B cell (primary cell): ENCODE measurements at regions of chr5 and their contacts with region 1.

Region 1: DNA sequence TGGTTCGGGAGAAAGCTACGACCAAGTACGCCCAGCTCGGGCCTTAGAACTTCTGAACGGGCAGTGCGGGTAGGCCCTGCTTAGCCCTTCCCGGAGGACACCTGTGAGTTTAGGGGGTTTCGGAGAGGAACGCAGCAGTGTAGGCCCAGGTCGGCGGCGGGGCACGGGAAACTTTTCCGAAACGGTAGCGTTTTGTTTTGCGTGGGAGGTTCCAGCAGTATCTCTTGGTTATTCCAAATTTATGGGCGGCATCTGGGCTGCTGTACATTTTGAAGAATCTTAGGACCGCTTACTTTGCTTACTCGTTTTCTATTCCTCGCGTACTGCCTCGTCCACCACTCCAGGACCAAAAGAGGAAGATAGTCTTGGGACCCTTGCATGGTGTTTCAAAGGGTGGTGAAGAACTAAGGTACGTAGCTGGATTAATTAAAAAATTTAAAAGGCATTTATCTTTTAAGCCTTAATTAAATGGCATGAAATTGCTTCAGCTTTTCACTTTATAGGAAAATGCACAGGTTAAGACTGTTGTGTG is 492 bp downstream of the TENT2 start:
- DNase-seq: no peak
- ATAC-seq: no peak
- H3K4me3 ChIP-seq: peak overlapping the region; percentile 93 to 98 (median 96)
- H3K4me3 Mint-ChIP-seq: peak overlapping the region; percentile 95
- H3K27ac ChIP-seq: peak overlapping the region; percentile 95 to 99
- H3K27ac Mint-ChIP-seq: peak overlapping the region; percentile 96
- H3K4me1 ChIP-seq: peaks cover 16 to 21% of the 10 kb centered on the region in 2 donors
- H3K4me1 Mint-ChIP-seq: peaks cover 36% of the 10 kb centered on the region
- H3K27me3 ChIP-seq: no peaks in the 10 kb centered on the region
- H3K27me3 Mint-ChIP-seq: no peaks in the 10 kb centered on the region
- CTCF ChIP-seq: no peak

Region 2: DNA sequence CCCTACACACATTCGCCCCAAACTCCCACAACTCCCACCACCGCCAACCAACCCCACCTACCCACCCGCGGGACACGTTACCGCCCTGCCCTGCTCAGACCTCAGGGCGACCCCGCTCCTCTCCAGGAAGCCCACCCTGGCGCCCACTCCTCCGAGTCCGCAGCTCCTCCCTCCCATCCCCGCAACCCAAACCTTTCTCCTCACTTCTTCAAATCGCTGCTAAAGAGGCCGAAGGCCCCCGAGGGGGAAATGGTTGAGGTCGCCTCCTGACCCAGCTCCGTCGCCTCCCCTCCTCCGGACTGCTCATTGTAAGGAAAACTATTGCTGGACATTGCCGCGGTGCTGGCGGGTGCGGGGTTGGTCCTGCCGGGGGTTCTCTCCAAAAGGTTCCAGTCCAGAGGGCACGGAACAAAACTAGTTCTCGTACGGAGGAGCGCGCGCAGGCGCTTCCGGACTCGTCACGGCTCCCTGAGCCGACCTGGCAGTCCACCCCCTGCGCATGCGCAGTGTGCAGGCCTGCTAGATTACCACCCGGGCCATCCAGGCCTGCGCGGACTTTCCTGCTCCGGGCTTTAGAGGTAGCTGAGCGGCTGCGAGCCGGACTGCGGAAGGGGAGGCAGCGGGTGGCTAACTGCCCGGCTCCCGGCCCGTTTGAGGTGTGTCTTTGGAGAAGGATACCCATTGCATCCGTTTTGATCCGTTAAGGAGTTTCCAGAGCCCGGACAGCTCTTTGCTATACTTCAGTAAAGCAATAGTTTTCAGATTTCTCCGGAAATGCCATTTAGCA is 1318.3 kb before region 1 on chr5 and contains the start of gene AP3B1:
- CTCF ChIA-PET with region 1: no interaction called
- POLR2A ChIA-PET with region 1: no interaction called
- intact Hi-C with region 1: loop called (anchors 5 kb)
- DNase-seq: peak; percentile 98
- ATAC-seq: peak; percentile 91
- H3K4me3 ChIP-seq: peak within 1 kb of the TSS; percentile 74 to 99 (median 87)
- H3K4me3 Mint-ChIP-seq: peak within 1 kb of the TSS; percentile 98
- H3K27ac ChIP-seq: peak within 1 kb of the TSS; percentile 75 to 90
- H3K27ac Mint-ChIP-seq: peak within 1 kb of the TSS; percentile 98
- H3K4me1 ChIP-seq: peaks cover 11 to 12% of the 10 kb centered on the region in 2 donors
- H3K4me1 Mint-ChIP-seq: peaks cover 36% of the 10 kb centered on the region
- H3K27me3 ChIP-seq: no peaks in the 10 kb centered on the region
- H3K27me3 Mint-ChIP-seq: no peaks in the 10 kb centered on the region
- CTCF ChIP-seq: no peak
- total RNA-seq, gene AP3B1: 58.9 and 63.5 TPM in 2 replicates

Region 3: GRCh38 chr5:79514391-79515105 is 98.2 kb before region 1 on chr5:
- CTCF ChIA-PET with region 1: interaction called, 4 read pairs
- POLR2A ChIA-PET with region 1: no interaction called
- intact Hi-C with region 1: loop called (anchors 1 kb)
- DNase-seq: peak; percentile 98
- ATAC-seq: peak; percentile 79
- H3K4me3 ChIP-seq: peak overlapping the region; percentile 32 to 85 (median 76)
- H3K4me3 Mint-ChIP-seq: peak overlapping the region; percentile 100
- H3K27ac ChIP-seq: peak overlapping the region; percentile 89 to 94
- H3K27ac Mint-ChIP-seq: peak overlapping the region; percentile 100
- H3K4me1 ChIP-seq: peaks cover 26 to 29% of the 10 kb centered on the region in 2 donors
- H3K4me1 Mint-ChIP-seq: peaks cover 36% of the 10 kb centered on the region
- H3K27me3 ChIP-seq: peaks cover 5 to 31% (median 28%) of the 10 kb centered on the region in 4 experiments
- H3K27me3 Mint-ChIP-seq: peaks cover 29% of the 10 kb centered on the region
- CTCF ChIP-seq: no peak

Region 4: DNA sequence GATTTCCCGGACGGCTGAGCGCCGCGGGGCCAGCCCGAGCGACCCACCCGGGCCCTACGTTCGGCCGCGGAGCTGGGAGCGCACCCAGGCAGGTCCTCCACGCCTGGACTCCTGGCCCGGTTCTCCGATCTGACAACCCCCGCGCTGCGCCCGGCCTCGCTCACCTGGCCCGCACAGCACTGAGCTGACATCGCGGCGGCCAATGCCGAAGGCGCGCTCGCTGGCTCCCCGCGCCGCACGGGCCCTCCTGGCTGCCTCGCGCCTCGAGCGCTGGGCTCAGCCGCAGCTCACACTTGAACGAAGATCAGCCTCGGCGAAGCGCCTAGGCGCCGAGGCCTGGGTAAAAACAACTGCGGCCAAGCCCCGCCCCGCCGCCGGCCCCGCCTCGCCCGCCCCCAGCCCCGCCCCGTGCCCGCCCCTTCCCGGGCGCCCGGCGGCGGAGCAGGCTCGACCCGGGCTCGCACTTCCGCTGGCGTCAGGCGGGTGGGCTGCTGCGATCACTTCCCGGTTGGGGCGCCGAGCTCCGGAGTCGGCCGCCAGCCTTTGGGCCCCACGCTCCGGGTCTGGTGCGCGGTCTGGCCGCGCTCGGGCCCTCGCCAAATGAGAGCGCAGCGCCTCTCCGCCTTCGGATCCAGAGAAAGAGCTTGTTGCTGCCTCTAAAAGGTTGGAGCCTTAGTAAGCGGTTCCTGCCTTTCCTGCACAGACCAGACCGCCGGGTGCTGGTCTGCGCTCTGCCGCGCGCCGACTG is 643.2 kb after region 1 on chr5 and contains the start of gene SERINC5:
- CTCF ChIA-PET with region 1: no interaction called
- POLR2A ChIA-PET with region 1: interaction called, 4 read pairs
- intact Hi-C with region 1: loop called (anchors 1 kb)
- DNase-seq: peak; percentile 87
- ATAC-seq: peak; percentile 87
- H3K4me3 ChIP-seq: peak within 1 kb of the TSS; percentile 80 to 93 (median 89)
- H3K4me3 Mint-ChIP-seq: peak within 1 kb of the TSS; percentile 100
- H3K27ac ChIP-seq: peak within 1 kb of the TSS; percentile 78 to 79
- H3K27ac Mint-ChIP-seq: peak within 1 kb of the TSS; percentile 98
- H3K4me1 ChIP-seq: peaks cover 9 to 24% of the 10 kb centered on the region in 2 donors
- H3K4me1 Mint-ChIP-seq: peaks cover 28% of the 10 kb centered on the region
- H3K27me3 ChIP-seq: no peaks in the 10 kb centered on the region
- H3K27me3 Mint-ChIP-seq: no peaks in the 10 kb centered on the region
- CTCF ChIP-seq: no peak
- total RNA-seq, gene SERINC5: 9.5 and 11.4 TPM in 2 replicates

Region 5: DNA sequence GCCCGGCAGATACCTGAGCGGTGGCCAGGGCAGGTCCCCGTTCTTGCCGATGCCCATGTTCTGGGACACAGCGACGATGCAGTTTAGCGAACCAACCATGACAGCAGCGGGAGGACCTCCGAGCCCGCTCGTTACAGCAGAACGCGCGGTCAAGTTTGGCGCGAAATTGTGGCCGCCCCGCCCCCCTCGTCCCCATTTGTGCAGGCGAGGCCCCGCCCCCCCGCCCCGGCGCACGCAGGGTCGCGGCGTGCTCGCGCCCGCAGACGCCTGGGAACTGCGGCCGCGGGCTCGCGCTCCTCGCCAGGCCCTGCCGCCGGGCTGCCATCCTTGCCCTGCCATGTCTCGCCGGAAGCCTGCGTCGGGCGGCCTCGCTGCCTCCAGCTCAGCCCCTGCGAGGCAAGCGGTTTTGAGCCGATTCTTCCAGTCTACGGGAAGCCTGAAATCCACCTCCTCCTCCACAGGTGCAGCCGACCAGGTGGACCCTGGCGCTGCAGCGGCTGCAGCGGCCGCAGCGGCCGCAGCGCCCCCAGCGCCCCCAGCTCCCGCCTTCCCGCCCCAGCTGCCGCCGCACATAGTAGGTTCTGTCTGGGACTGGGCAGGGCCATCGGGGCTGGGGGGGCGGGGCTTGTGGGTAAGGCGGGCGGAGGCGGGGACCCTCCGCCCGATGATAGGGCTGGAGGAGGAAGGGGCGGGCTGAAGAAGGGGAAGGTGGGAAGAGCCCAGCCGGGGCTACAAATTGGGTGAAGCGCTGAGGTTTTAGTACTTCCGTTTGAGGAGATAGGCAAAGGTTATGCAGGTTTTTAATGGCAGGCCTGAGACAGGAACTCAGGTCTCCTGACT is 1041.9 kb after region 1 on chr5 and contains the starts of genes DHFR and MSH3:
- CTCF ChIA-PET with region 1: no interaction called
- POLR2A ChIA-PET with region 1: no interaction called
- intact Hi-C with region 1: loop called (anchors 5 kb)
- DNase-seq: peak; percentile 94
- ATAC-seq: peak; percentile 73
- H3K4me3 ChIP-seq: peak within 1 kb of the TSS; percentile 59 to 90 (median 74)
- H3K4me3 Mint-ChIP-seq: peak within 1 kb of the TSS; percentile 93
- H3K27ac ChIP-seq: peak within 1 kb of the TSS; percentile 68 to 71
- H3K27ac Mint-ChIP-seq: peak within 1 kb of the TSS; percentile 95
- H3K4me1 ChIP-seq: peaks cover 17 to 21% of the 10 kb centered on the region in 2 donors
- H3K4me1 Mint-ChIP-seq: peaks cover 23% of the 10 kb centered on the region
- H3K27me3 ChIP-seq: no peaks in the 10 kb centered on the region
- H3K27me3 Mint-ChIP-seq: no peaks in the 10 kb centered on the region
- CTCF ChIP-seq: peak; percentile 28
- total RNA-seq, gene DHFR: 12.0 and 12.6 TPM in 2 replicates
- total RNA-seq, gene MSH3: 24.5 and 26.3 TPM in 2 replicates